ENCODE measurements at regions of chr9 and their contacts with region 1.

Region 1: GRCh38 chr9:103545260-103545659 is 548.8 kb upstream of the SMC2 start:
- DNase-seq: no peak
- ATAC-seq: peak in 3 of 4 donors; percentile 65 to 89 (median 86)
- H3K4me3 ChIP-seq: peak overlapping the region; percentile 12
- H3K27ac ChIP-seq: no peak overlapping the region
- H3K4me1 ChIP-seq: peaks cover 6% of the 10 kb centered on the region
- H3K27me3 ChIP-seq: no peaks in the 10 kb centered on the region
- CTCF ChIP-seq: no peak

Region 2: GRCh38 chr9:103431816-103432215 is 113.4 kb before region 1 on chr9:
- intact Hi-C with region 1: no loop called
- DNase-seq: no peak
- ATAC-seq: no peak
- H3K4me3 ChIP-seq: no peak overlapping the region
- H3K27ac ChIP-seq: no peak overlapping the region
- H3K4me1 ChIP-seq: no peaks in the 10 kb centered on the region
- H3K27me3 ChIP-seq: no peaks in the 10 kb centered on the region
- CTCF ChIP-seq: no peak

Region 3: GRCh38 chr9:103502015-103502414 is 43.2 kb before region 1 on chr9:
- intact Hi-C with region 1: loop called in 1 of 2 experiments (anchors 5 kb)
- DNase-seq: no peak
- ATAC-seq: no peak
- H3K4me3 ChIP-seq: no peak overlapping the region
- H3K27ac ChIP-seq: no peak overlapping the region
- H3K4me1 ChIP-seq: no peaks in the 10 kb centered on the region
- H3K27me3 ChIP-seq: no peaks in the 10 kb centered on the region
- CTCF ChIP-seq: no peak

Region 4: GRCh38 chr9:103586721-103587120 is 41.5 kb after region 1 on chr9:
- intact Hi-C with region 1: no loop called
- DNase-seq: no peak
- ATAC-seq: no peak
- H3K4me3 ChIP-seq: no peak overlapping the region
- H3K27ac ChIP-seq: no peak overlapping the region
- H3K4me1 ChIP-seq: no peaks in the 10 kb centered on the region
- H3K27me3 ChIP-seq: no peaks in the 10 kb centered on the region
- CTCF ChIP-seq: no peak

Region 5: DNA sequence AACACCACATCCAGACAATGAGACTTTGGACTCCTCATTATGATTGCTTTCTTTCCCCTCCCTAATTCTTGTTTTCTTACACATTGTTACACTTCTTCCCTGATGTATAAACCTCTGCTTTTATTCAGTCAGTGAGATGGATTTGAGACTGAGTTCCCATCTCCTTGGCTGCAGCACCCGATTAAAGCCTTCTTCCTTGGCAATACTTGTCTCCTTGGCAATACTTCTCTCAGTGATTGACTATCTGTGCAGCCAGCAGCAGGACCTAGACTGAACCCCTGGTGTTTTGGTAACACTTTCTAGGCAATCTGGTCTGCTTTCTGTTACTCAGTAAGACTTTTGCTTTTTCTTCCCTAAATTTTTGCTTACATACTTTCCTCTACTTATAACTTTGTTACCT is 56.0 kb after region 1 on chr9:
- intact Hi-C with region 1: no loop called
- DNase-seq: no peak
- ATAC-seq: no peak
- H3K4me3 ChIP-seq: no peak overlapping the region
- H3K27ac ChIP-seq: no peak overlapping the region
- H3K4me1 ChIP-seq: no peaks in the 10 kb centered on the region
- H3K27me3 ChIP-seq: no peaks in the 10 kb centered on the region
- CTCF ChIP-seq: no peak

Region 6: GRCh38 chr9:103713631-103714030 is 168.4 kb after region 1 on chr9:
- intact Hi-C with region 1: no loop called
- DNase-seq: no peak
- ATAC-seq: no peak
- H3K4me3 ChIP-seq: no peak overlapping the region
- H3K27ac ChIP-seq: no peak overlapping the region
- H3K4me1 ChIP-seq: no peaks in the 10 kb centered on the region
- H3K27me3 ChIP-seq: no peaks in the 10 kb centered on the region
- CTCF ChIP-seq: no peak

Region 7: GRCh38 chr9:104808035-104808614 is 1262.9 kb after region 1 on chr9:
- intact Hi-C with region 1: loop called in 1 of 2 experiments (anchors 10 kb)
- DNase-seq: peak in 1 of 2 donors; percentile 22
- ATAC-seq: no peak
- H3K4me3 ChIP-seq: no peak overlapping the region
- H3K27ac ChIP-seq: peak overlapping the region; percentile 19
- H3K4me1 ChIP-seq: peaks cover 18% of the 10 kb centered on the region
- H3K27me3 ChIP-seq: no peaks in the 10 kb centered on the region
- CTCF ChIP-seq: no peak